ENCODE measurements at regions of chr2 and their contacts with region 1.

Region 1: GRCh38 chr2:177332041-177332991 is 60.3 kb upstream of the AGPS start:
- DNase-seq: peak; percentile 80
- H3K4me3 ChIP-seq: peak overlapping the region in 1 of 4 donors; percentile 12
- H3K27ac ChIP-seq: peak overlapping the region; percentile 12 to 78 (median 69)
- H3K4me1 ChIP-seq: peaks cover 0 to 17% (median 5%) of the 10 kb centered on the region in 4 donors
- H3K27me3 ChIP-seq: no peaks in the 10 kb centered on the region
- CTCF ChIP-seq: peak; percentile 52 to 79 (median 64)
- EP300 ChIP-seq: no peak
- POLR2A ChIP-seq: no peak

Region 2: GRCh38 chr2:177263451-177264208 is 68.7 kb before region 1 on chr2:
- intact Hi-C with region 1: loop called (anchors 2 kb)
- DNase-seq: peak; percentile 99
- H3K4me3 ChIP-seq: peak overlapping the region; percentile 86 to 99 (median 99)
- H3K27ac ChIP-seq: peak overlapping the region; percentile 90 to 100 (median 100)
- H3K4me1 ChIP-seq: peaks cover 0 to 48% (median 45%) of the 10 kb centered on the region in 4 donors
- H3K27me3 ChIP-seq: no peaks in the 10 kb centered on the region
- CTCF ChIP-seq: peak; percentile 88 to 91 (median 90)
- EP300 ChIP-seq: peak in 2 of 4 donors; percentile 71 to 88
- POLR2A ChIP-seq: peak; percentile 53 to 54

Region 3: GRCh38 chr2:177419274-177419673 is 87.0 kb after region 1 on chr2:
- intact Hi-C with region 1: loop called (anchors 2 kb)
- DNase-seq: no peak
- H3K4me3 ChIP-seq: no peak overlapping the region
- H3K27ac ChIP-seq: no peak overlapping the region
- H3K4me1 ChIP-seq: peaks cover 0 to 54% (median 27%) of the 10 kb centered on the region in 4 donors
- H3K27me3 ChIP-seq: no peaks in the 10 kb centered on the region
- CTCF ChIP-seq: no peak
- EP300 ChIP-seq: no peak
- POLR2A ChIP-seq: no peak

Region 4: DNA sequence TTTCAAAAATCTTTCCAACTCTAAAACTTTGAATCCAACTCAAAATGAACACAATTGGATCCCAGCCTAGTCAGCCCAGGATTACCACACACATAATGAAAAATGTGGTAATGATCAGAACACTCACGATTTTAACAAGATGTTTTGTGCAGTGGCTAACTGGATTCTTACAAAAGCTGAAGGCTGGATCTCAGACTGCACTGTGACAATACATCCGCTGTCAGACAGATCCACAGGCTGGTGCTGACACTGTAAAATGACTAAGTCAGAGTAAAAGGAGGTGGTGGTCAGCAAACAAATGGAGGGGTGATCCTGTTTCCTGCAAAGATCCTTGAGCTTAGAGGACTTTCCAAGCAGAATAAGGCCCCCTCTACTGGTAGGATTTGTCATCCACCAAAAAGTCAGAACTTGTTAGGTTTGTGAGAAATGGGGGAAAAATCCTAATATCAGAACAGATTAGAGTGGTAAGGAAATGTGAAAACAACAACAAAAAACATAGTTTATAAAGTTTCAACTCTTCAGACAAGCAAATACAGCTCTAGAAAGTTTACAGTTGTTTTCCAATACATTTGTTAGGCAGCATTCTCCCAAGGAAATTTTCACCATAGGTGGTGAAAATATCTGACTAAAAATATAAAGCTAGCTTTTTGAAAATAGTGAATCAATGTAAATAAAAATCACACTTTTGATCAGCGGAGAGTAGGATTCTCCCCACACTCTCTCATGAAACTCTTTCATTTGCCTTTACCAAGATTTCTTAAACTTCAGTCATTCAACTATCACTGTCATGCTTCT is 272.2 kb after region 1 on chr2:
- intact Hi-C with region 1: loop called (anchors 5 kb)
- DNase-seq: no peak
- H3K4me3 ChIP-seq: no peak overlapping the region
- H3K27ac ChIP-seq: peak overlapping the region; percentile 9 to 45 (median 31)
- H3K4me1 ChIP-seq: peaks cover 0 to 15% (median under 1%) of the 10 kb centered on the region in 4 donors
- H3K27me3 ChIP-seq: no peaks in the 10 kb centered on the region
- CTCF ChIP-seq: peak; percentile 38 to 68 (median 56)
- EP300 ChIP-seq: no peak
- POLR2A ChIP-seq: no peak

Region 5: GRCh38 chr2:177724398-177725287 is 392.3 kb after region 1 on chr2:
- intact Hi-C with region 1: loop called (anchors 2 kb)
- DNase-seq: peak; percentile 65
- H3K4me3 ChIP-seq: no peak overlapping the region
- H3K27ac ChIP-seq: no peak overlapping the region
- H3K4me1 ChIP-seq: peaks cover 0 to 6% (median 0%) of the 10 kb centered on the region in 4 donors
- H3K27me3 ChIP-seq: no peaks in the 10 kb centered on the region
- CTCF ChIP-seq: peak; percentile 66 to 82 (median 74)
- EP300 ChIP-seq: no peak
- POLR2A ChIP-seq: no peak

Region 6: GRCh38 chr2:177758591-177759371 is 426.5 kb after region 1 on chr2:
- intact Hi-C with region 1: loop called (anchors 5 kb)
- DNase-seq: no peak
- H3K4me3 ChIP-seq: no peak overlapping the region
- H3K27ac ChIP-seq: peak overlapping the region in 1 of 4 donors; percentile 23
- H3K4me1 ChIP-seq: peaks cover 0 to 26% (median 20%) of the 10 kb centered on the region in 4 donors
- H3K27me3 ChIP-seq: no peaks in the 10 kb centered on the region
- CTCF ChIP-seq: peak; percentile 13 to 46 (median 33)
- EP300 ChIP-seq: no peak
- POLR2A ChIP-seq: no peak